ENCODE measurements at regions of chr13 and their contacts with region 1.

Region 1: DNA sequence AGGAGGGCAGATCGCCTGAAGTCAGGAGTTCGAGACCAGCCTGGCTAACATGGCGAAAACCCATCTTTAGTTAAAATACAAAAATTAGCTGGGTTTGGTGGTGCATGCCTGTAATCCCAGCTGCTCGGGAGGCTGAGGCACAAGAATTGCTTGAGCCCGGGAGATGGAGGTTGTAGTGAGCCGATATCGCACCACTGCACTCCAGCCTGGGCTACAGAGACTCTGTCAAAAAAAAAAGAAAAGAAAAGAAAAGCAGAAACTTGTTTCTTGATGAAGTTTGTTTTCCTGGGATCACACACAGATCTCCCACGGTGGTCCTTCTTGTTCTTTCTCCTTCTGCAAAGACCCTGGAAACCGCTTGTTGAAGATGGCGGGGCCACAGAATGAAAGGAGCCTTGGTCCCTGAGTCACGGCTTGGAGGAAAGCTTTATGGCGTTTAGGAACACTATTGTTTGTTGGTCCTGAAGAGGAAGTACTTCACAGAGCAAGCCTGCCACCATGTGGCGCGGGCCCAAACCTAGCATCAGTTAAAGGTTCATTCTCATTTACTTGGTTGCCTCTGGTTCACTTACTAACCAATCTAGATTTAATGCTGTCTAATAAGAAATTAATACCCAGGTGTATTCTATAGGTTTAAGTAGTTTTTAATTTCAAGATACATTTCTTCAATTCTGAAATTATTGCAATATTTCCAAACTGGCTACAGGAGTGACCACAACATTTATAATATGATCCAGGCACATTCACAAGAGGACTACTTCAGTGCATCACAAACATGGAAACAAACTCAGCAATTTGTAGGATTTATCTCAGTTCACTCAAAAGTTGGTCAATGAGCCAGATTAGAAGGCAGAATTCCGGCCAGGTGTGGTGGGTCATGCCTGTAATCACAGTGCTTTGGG is 21.3 kb upstream of the ARL11 start:
- DNase-seq: peak; percentile 81 to 89 (median 85)
- H3K4me3 ChIP-seq: peak overlapping the region; percentile 5
- H3K27ac ChIP-seq: no peak overlapping the region
- H3K4me1 ChIP-seq: no peaks in the 10 kb centered on the region
- H3K27me3 ChIP-seq: no peaks in the 10 kb centered on the region
- CTCF ChIP-seq: peak; percentile 49 to 71 (median 54)
- EP300 ChIP-seq: no peak
- POLR2A ChIP-seq: no peak

Region 2: GRCh38 chr13:49300739-49301589 is 306.0 kb before region 1 on chr13:
- intact Hi-C with region 1: loop called in 2 of 4 experiments (anchors 5 to 10 kb)
- DNase-seq: peak in 4 of 5 donors; percentile 54 to 70 (median 60)
- H3K4me3 ChIP-seq: peak overlapping the region; percentile 3
- H3K27ac ChIP-seq: peak overlapping the region in 1 of 2 donors; percentile 46
- H3K4me1 ChIP-seq: peaks cover 6% of the 10 kb centered on the region
- H3K27me3 ChIP-seq: no peaks in the 10 kb centered on the region
- CTCF ChIP-seq: peak; percentile 78 to 92 (median 91)
- EP300 ChIP-seq: no peak
- POLR2A ChIP-seq: no peak

Region 3: GRCh38 chr13:49443704-49444523 is 163.1 kb before region 1 on chr13 and contains the starts of genes CAB39L and SETDB2:
- intact Hi-C with region 1: loop called in 1 of 4 experiments (anchors 10 kb)
- DNase-seq: peak; percentile 98 to 99 (median 99)
- H3K4me3 ChIP-seq: peak within 1 kb of the TSS; percentile 90
- H3K27ac ChIP-seq: peak within 1 kb of the TSS; percentile 91 to 92
- H3K4me1 ChIP-seq: no peaks in the 10 kb centered on the region
- H3K27me3 ChIP-seq: no peaks in the 10 kb centered on the region
- CTCF ChIP-seq: peak; percentile 50 to 83 (median 79)
- EP300 ChIP-seq: no peak
- POLR2A ChIP-seq: peak; percentile 74
- total RNA-seq, gene CAB39L: 22.6 to 42.7 (median 26.5) TPM
- total RNA-seq, gene SETDB2: 9.1 to 21.6 (median 19.8) TPM

Region 4: DNA sequence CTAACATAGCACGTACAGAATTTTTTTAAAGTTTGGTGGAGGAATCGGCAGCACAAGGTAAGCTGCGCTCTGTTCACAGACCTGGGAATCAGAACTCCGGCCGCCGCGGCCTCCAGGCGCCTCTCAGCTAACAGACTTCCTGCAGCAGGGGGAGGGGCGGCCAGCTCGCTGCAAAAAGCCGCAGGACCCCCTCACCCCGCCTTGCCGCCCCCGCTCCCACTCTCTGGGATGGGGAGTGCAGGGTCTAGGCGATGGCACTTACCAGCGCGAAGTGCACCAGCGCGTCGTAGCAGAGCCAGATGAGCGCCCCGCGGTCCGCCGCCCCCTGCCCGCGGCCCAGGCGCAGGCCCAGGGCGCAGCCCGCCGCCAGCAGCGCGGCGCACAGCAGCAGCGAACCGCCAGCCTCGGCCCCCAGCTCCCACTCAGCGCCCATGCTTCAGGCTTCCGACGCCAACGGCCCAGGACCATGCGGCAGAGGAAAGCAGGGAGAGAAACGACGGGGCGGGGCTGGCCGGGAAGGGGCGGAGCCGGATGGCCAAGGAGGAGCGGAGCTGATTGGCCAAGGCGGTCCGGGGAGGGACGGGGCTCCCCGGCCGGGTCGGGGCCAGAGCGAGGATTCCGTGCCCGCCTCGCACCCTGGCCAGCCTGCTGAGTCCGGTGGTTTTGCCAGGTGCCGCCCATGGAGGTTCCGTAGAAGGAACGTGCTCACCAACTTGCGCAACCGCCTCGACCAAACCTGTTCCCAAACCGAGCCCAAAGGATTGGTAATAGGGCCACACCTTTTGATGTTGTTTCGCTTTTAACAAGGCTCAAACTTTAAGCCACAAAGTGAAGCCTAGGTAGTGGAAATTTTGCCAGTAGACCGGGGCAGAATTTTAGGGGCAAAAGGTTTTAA is 84.2 kb after region 1 on chr13 and contains the start of gene EBPL:
- intact Hi-C with region 1: no loop called
- DNase-seq: peak; percentile 91 to 95 (median 94)
- H3K4me3 ChIP-seq: peak within 1 kb of the TSS; percentile 69
- H3K27ac ChIP-seq: peak within 1 kb of the TSS; percentile 74 to 90
- H3K4me1 ChIP-seq: peaks cover 5% of the 10 kb centered on the region
- H3K27me3 ChIP-seq: no peaks in the 10 kb centered on the region
- CTCF ChIP-seq: peak in 1 of 3 donors; percentile 12
- EP300 ChIP-seq: no peak
- POLR2A ChIP-seq: peak; percentile 51
- total RNA-seq, gene EBPL: 48.7 to 112 (median 60.2) TPM

Measured in ovary (tissue), 10 donors.